ENCODE measurements at regions of chr2 and their contacts with region 1.

Region 1: GRCh38 chr2:234496835-234497591 is at the start of gene ARL4C:
- DNase-seq: peak; percentile 56 to 85 (median 80)
- ATAC-seq: peak; percentile 77 to 90 (median 86)
- H3K4me3 ChIP-seq: peak within 1 kb of the TSS; percentile 36 to 68 (median 57)
- H3K27ac ChIP-seq: peak within 1 kb of the TSS in 3 of 4 donors; percentile 57 to 80 (median 67)
- H3K4me1 ChIP-seq: peaks cover 0 to 3% (median 3%) of the 10 kb centered on the region in 3 donors
- H3K27me3 ChIP-seq: no peaks in the 10 kb centered on the region
- CTCF ChIP-seq: no peak
- total RNA-seq, gene ARL4C: 2.4 to 15.4 (median 4.9) TPM

Region 2: GRCh38 chr2:234142530-234142929 is 354.5 kb before region 1 on chr2:
- intact Hi-C with region 1: loop called in 1 of 3 experiments (anchors 5 kb)
- DNase-seq: no peak
- ATAC-seq: no peak
- H3K4me3 ChIP-seq: no peak overlapping the region
- H3K27ac ChIP-seq: no peak overlapping the region
- H3K4me1 ChIP-seq: no peaks in the 10 kb centered on the region
- H3K27me3 ChIP-seq: no peaks in the 10 kb centered on the region
- CTCF ChIP-seq: no peak

Region 3: GRCh38 chr2:234288974-234289455 is 208.0 kb before region 1 on chr2:
- intact Hi-C with region 1: loop called in 1 of 3 experiments (anchors 10 kb)
- DNase-seq: peak in 5 of 6 donors; percentile 23 to 77 (median 51)
- ATAC-seq: peak; percentile 41 to 70 (median 64)
- H3K4me3 ChIP-seq: no peak overlapping the region
- H3K27ac ChIP-seq: no peak overlapping the region
- H3K4me1 ChIP-seq: peaks cover 4 to 12% (median 6%) of the 10 kb centered on the region in 3 donors
- H3K27me3 ChIP-seq: no peaks in the 10 kb centered on the region
- CTCF ChIP-seq: peak; percentile 21 to 67 (median 47)

Measured in pancreas (tissue), 10 donors.